ENCODE measurements at regions of chr1 and their contacts with region 1.

Region 1: DNA sequence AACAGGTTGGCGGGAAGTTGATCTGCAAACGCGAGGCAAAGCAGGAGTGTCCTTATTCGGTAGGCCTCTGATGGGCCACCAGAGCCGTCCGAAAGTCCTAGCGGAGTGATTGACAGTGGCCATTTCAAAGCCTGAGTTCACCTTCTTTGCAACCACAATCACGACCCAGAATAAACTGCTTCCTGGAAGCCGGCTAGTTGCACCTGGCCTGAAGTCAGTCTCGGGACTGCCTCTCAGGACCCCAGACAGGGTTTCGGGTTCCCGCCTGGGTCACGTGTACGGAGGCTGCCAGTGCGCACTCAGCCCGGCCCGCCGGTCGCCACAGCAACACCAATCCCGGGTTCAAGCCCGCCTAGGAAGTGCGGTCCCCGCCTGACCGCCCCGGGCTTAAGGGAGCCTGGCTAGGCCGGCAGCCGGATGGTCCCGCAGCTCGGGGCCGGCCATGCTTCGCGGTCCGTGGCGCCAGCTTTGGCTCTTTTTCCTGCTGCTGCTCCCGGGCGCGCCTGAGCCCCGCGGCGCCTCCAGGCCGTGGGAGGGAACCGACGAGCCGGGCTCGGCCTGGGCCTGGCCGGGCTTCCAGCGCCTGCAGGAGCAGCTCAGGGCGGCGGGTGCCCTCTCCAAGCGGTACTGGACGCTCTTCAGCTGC is at the start of gene TOR3A:
- DNase-seq: peak; percentile 88
- ATAC-seq: peak; percentile 73
- H3K4me3 Mint-ChIP-seq: peak within 1 kb of the TSS; percentile 99
- H3K27ac Mint-ChIP-seq: peak within 1 kb of the TSS; percentile 95
- H3K4me1 Mint-ChIP-seq: peaks cover 27% of the 10 kb centered on the region
- H3K27me3 Mint-ChIP-seq: no peaks in the 10 kb centered on the region
- CTCF ChIP-seq: no peak
- total RNA-seq, gene TOR3A: 28.8 to 30.3 TPM

Region 2: DNA sequence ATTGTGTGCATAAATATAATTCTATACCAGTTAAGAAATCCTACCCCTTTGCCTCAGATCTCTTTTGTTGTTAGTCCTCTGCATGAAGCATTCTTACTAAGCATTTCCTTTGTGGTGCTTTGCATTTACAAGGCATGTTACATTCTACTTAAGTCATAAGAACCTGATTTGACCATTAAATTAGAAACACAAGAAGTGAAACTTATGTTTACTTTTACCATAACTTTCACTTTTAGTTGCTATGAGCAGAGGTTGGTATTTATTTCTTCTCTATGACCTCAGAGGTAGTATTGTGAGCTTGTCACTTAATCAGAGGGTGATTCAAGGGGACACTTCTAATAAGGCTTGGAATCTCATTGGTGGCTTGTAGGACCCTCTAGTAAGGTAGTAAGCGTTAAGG is 47.1 kb before region 1 on chr1:
- CTCF ChIA-PET with region 1: interaction called, 4 read pairs
- POLR2A ChIA-PET with region 1: interaction called, 5 read pairs
- intact Hi-C with region 1: loop called (anchors 5 kb)
- DNase-seq: no peak
- ATAC-seq: peak; percentile 78
- H3K4me3 Mint-ChIP-seq: no peak overlapping the region
- H3K27ac Mint-ChIP-seq: peak overlapping the region; percentile 60
- H3K4me1 Mint-ChIP-seq: peaks cover 77% of the 10 kb centered on the region
- H3K27me3 Mint-ChIP-seq: no peaks in the 10 kb centered on the region
- CTCF ChIP-seq: no peak

Region 3: DNA sequence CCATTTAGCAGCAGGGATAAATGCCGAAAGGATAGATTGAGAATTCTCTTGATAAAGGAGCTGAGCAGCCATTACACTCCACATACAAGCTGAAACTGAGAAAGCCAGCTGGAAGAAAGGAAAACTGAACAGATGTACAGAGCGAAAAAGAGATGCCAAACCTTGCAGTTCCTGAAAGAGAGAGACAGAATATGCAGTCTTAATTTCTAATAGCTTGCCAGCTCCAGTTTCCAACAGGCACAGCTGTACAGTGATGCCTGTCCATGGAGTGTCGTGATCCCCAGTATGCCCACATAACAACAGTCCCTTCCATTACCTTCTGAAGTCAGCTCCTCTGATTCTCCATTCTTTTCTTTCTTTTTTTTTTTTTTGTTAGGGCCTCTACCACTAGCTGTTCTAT is 125.0 kb after region 1 on chr1:
- CTCF ChIA-PET with region 1: no interaction called
- POLR2A ChIA-PET with region 1: no interaction called
- intact Hi-C with region 1: loop called (anchors 10 kb)
- DNase-seq: no peak
- ATAC-seq: no peak
- H3K4me3 Mint-ChIP-seq: no peak overlapping the region
- H3K27ac Mint-ChIP-seq: no peak overlapping the region
- H3K4me1 Mint-ChIP-seq: peaks cover 38% of the 10 kb centered on the region
- H3K27me3 Mint-ChIP-seq: no peaks in the 10 kb centered on the region
- CTCF ChIP-seq: no peak

Region 4: DNA sequence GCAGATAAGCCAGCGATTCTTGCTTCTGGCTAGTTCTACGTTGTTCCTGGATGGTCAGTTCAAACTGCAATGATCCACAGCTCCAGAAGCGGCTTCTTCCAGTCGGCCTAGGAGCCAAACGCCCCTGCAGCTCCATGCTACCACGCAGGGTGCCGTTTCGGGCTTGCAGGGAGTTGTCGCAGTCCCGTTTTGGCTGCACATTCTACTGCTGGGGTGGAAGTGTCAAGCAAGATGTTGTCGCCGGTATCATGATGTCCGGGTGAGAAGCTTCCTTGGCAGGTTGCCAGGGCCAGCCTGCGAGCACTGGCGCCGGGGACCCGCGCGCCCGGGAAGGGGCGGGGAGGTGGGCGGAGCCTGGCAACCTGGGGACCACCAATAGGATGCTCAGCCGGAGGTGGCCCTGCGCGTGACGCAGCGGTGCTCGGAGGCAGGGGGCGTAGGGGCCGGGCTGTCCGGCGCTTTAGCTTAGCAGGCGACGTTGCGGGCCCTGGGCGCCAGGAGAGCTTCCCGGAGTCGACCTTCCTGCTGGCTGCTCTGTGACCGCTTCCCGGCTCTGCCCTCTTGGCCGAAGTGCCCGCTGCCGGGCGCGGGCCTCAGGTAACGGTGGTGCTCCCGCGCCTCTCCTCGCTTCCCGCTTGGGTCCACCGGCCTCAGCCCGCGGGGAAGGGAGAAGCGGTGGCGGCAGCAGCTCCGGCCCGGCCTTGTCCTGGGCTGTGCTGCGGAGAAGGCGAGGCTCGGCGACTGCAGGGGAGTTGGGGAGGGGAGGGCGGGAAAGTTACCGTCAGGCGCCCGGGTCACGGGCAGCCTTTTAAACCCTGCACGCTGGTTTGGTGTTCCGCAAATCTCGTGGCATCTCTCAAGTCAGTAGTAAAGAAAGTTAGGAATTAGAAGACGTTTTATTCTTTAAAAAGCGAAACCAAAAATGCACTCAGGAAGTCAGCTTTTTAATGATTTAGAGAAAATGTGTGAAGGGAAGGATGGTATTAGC is 211.8 kb after region 1 on chr1 and contains the start of gene SOAT1:
- CTCF ChIA-PET with region 1: interaction called, 5 read pairs
- POLR2A ChIA-PET with region 1: interaction called, 13 read pairs
- intact Hi-C with region 1: no loop called
- DNase-seq: peak; percentile 96
- ATAC-seq: peak; percentile 97
- H3K4me3 Mint-ChIP-seq: peak within 1 kb of the TSS; percentile 86
- H3K27ac Mint-ChIP-seq: peak within 1 kb of the TSS; percentile 94
- H3K4me1 Mint-ChIP-seq: peaks cover 37% of the 10 kb centered on the region
- H3K27me3 Mint-ChIP-seq: no peaks in the 10 kb centered on the region
- CTCF ChIP-seq: no peak
- total RNA-seq, gene SOAT1: 58.0 to 58.7 TPM